Sigmoid colon (tissue), 7 donors: ENCODE measurements at regions of chr10 and their contacts with region 1.

Region 1: GRCh38 chr10:29618341-29619171 is 16.2 kb downstream of the SVIL start:
- DNase-seq: peak; percentile 83
- H3K4me3 ChIP-seq: peak overlapping the region in 3 of 4 donors; percentile 4 to 11 (median 9)
- H3K27ac ChIP-seq: peak overlapping the region; percentile 77 to 90 (median 86)
- H3K4me1 ChIP-seq: peaks cover 0 to 84% (median 75%) of the 10 kb centered on the region in 4 donors
- H3K27me3 ChIP-seq: no peaks in the 10 kb centered on the region
- CTCF ChIP-seq: no peak
- EP300 ChIP-seq: peak in 1 of 4 donors; percentile 30
- POLR2A ChIP-seq: no peak

Region 2: GRCh38 chr10:29642990-29643389 is 24.4 kb after region 1 on chr10:
- intact Hi-C with region 1: loop called (anchors 2 kb)
- DNase-seq: peak; percentile 83
- H3K4me3 ChIP-seq: no peak overlapping the region
- H3K27ac ChIP-seq: peak overlapping the region; percentile 78 to 90 (median 85)
- H3K4me1 ChIP-seq: peaks cover 0 to 82% (median 71%) of the 10 kb centered on the region in 4 donors
- H3K27me3 ChIP-seq: no peaks in the 10 kb centered on the region
- CTCF ChIP-seq: no peak
- EP300 ChIP-seq: peak in 1 of 4 donors; percentile 76
- POLR2A ChIP-seq: no peak

Region 3: GRCh38 chr10:29926693-29927048 is 308.1 kb after region 1 on chr10:
- intact Hi-C with region 1: no loop called
- DNase-seq: no peak
- H3K4me3 ChIP-seq: no peak overlapping the region
- H3K27ac ChIP-seq: no peak overlapping the region
- H3K4me1 ChIP-seq: peaks cover 0 to 11% (median 4%) of the 10 kb centered on the region in 4 donors
- H3K27me3 ChIP-seq: no peaks in the 10 kb centered on the region
- CTCF ChIP-seq: peak in 2 of 4 experiments; percentile 14 to 22
- EP300 ChIP-seq: no peak
- POLR2A ChIP-seq: no peak

Region 4: GRCh38 chr10:30027057-30028005 is 408.8 kb after region 1 on chr10:
- intact Hi-C with region 1: no loop called
- DNase-seq: peak; percentile 89
- H3K4me3 ChIP-seq: no peak overlapping the region
- H3K27ac ChIP-seq: peak overlapping the region; percentile 57 to 85 (median 80)
- H3K4me1 ChIP-seq: peaks cover 0 to 50% (median 44%) of the 10 kb centered on the region in 4 donors
- H3K27me3 ChIP-seq: no peaks in the 10 kb centered on the region
- CTCF ChIP-seq: no peak
- EP300 ChIP-seq: no peak
- POLR2A ChIP-seq: no peak